Activated naive CD4-positive, alpha-beta T cell treated with anti-CD3 and anti-CD28 coated beads, Interleukin-2, amount 10 ng/mL, durations not matched to agents 7 days and 5 days (primary cell): ENCODE measurements at regions of chr11 and their contacts with region 1.

Region 1: DNA sequence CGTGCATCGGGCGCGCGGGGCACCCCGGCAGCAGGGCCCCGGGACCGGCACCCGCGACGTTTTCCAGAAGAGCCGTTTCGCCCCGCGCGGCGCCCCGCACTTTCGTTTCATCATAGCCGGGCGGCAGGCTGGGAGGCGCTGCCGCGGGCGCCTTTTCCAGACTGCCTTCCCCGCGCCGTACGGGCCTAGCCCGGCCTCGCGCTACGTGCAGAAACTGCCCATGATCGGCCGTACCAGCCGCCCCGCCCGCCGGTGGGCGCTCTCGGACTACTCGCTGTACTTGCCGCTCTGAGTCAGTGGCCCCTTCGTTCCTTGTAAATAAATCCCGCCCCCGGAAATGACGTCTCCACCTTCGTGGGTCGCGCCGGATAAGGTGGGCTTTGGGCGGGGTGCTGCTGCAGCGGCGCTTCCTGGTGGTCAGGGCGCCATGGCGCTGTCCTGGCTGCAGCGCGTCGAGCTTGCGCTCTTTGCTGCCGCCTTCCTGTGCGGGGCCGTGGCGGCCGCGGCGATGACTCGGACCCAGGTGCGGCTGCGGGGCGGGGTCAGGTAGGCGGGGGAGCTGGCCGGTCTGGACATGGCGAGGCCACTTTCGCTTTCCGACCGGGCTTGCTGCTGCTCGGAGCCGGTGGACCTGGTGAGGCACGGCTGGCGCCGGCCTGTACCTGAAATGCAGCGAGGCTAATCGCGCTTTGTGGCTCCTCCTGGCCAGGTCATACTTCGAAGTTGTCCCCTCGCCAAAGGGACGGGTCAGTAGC is at the start of gene TMEM179B:
- DNase-seq: peak; percentile 99
- H3K4me3 Mint-ChIP-seq: peak within 1 kb of the TSS; percentile 96
- H3K27ac Mint-ChIP-seq: peak within 1 kb of the TSS; percentile 98
- H3K4me1 Mint-ChIP-seq: peaks cover 50% of the 10 kb centered on the region
- H3K27me3 Mint-ChIP-seq: no peaks in the 10 kb centered on the region

Region 2: DNA sequence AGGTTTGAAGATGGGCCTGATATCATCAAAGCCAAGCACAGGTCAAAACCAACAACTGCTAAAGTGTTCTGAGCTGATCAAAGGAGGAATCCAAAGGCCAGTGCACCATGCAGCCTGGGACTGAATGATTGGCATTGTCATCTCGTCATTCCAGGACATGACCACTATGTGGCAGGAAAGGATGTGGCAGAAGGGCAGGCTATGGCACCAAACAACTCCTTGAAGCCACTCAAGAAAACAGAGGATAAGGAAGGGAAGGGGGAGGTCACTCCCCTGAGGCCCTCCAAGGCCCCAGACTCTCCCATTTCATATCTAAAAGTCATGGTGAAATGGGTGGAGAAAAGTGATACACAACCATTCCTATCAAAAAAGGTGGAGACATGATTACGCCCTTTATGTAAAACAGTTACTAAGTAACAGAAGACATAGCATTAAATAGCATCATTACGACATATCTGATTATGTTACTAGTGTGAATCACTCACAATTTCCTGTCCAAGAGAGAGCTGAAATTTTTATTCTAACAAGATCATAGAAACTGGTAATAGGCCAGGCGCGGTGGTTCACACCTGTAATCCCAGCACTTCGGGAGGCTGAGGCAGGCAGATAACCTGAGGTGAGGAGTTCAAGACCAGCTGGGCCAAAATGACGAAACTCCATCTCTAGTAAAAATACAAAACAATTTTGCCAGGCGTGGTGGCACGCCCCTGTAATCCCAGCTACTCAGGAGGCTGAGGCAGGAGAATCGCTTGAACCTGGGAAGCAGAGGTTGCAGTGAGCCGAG is 289.9 kb before region 1 on chr11:
- CTCF ChIA-PET with region 1: no interaction called
- DNase-seq: peak; percentile 36
- H3K4me3 Mint-ChIP-seq: no peak overlapping the region
- H3K27ac Mint-ChIP-seq: no peak overlapping the region
- H3K4me1 Mint-ChIP-seq: peaks cover 5% of the 10 kb centered on the region
- H3K27me3 Mint-ChIP-seq: peaks cover 51% of the 10 kb centered on the region

Region 3: GRCh38 chr11:62728171-62728988 is 58.8 kb before region 1 on chr11 and contains the start of gene TTC9C:
- CTCF ChIA-PET with region 1: interaction called, 10 read pairs
- DNase-seq: peak; percentile 90
- H3K4me3 Mint-ChIP-seq: peak within 1 kb of the TSS; percentile 94
- H3K27ac Mint-ChIP-seq: peak within 1 kb of the TSS; percentile 99
- H3K4me1 Mint-ChIP-seq: peaks cover 53% of the 10 kb centered on the region
- H3K27me3 Mint-ChIP-seq: peaks cover 3% of the 10 kb centered on the region

Region 4: DNA sequence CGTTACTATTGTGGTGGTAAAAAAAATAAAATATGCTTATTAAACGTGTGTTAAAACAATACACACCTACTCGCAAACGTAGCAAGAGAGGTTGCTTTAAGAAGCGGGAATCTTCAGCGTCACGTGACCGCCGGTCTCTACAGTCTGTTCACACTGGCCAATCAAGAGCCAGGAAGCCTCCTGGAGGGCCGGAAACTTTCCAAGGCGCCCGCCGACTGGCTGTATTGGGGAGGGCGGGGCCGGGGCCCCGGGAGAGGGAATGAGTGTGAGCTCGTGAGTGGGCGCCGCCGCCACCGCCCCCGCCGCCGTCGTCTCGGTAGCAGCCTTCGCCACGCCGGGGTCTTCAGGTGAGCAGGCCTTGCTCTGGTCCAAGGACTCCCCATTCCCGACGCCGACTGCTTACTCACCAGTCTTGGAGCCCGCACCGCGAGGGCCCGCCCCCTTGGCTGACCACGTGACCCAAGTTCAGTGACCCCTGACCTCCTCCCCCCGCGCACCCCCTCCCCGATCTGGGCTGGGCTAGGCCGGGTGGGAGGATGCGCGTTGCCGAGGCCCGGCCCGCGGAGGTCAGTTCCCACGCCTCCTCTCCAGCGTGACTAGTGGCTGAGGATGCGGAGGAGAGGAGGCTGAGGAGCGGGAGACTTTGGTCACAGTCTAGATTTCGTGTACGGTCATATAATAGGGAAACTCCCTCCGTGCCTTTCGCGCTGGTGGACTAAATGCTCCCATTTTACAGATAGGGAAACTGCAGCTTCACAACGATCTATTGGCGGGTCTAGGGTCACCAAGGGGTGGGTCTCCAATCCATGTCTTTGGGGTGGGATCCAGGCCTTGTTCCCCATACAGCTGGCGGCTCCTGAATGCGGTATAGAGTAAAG is 15.8 kb before region 1 on chr11 and contains the start of gene TAF6L:
- CTCF ChIA-PET with region 1: interaction called, 65 read pairs
- DNase-seq: peak; percentile 97
- H3K4me3 Mint-ChIP-seq: peak within 1 kb of the TSS; percentile 90
- H3K27ac Mint-ChIP-seq: peak within 1 kb of the TSS; percentile 94
- H3K4me1 Mint-ChIP-seq: peaks cover 36% of the 10 kb centered on the region
- H3K27me3 Mint-ChIP-seq: no peaks in the 10 kb centered on the region

Region 5: GRCh38 chr11:62805076-62805892 is 18.1 kb after region 1 on chr11 and contains the start of gene NXF1:
- CTCF ChIA-PET with region 1: interaction called, 15 read pairs
- DNase-seq: peak; percentile 94
- H3K4me3 Mint-ChIP-seq: peak within 1 kb of the TSS; percentile 97
- H3K27ac Mint-ChIP-seq: peak within 1 kb of the TSS; percentile 97
- H3K4me1 Mint-ChIP-seq: peaks cover 34% of the 10 kb centered on the region
- H3K27me3 Mint-ChIP-seq: peaks cover 4% of the 10 kb centered on the region

Region 6: DNA sequence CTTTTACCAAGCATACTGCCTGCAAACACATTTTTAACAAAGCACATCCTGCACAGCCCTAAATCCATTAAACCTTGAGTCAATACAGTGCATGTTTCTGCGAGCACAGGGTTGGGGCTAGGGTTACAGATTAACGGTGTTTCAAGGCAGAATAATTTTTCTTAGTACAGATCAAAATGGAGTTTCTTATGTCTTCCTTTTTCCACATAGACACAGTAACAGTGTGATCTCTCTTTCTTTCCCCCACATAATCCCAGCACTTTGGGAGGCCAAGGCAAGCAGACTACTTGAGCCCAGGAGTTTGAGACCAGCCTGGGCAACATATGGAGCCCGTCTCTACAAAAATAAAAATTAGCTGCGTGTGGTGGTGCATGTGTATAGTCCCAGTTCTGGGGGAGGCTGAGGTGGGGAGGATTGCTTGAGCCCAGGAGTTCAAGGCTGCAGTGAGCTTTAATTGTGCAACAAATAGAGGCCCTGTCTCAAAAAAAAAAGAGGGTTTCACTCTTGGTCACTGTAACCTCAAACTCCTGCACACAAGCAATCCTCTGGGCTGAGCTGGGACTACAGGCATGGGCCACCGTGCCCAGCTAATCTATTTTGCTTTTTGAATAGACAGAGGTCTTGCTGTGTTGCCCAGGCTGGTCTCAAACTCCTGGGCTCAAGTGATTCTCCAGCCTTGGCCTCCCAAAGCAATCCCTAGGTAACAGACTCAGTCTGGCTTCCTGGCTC is 73.8 kb after region 1 on chr11:
- CTCF ChIA-PET with region 1: interaction called, 46 read pairs
- DNase-seq: no peak
- H3K4me3 Mint-ChIP-seq: no peak overlapping the region
- H3K27ac Mint-ChIP-seq: peak overlapping the region; percentile 81
- H3K4me1 Mint-ChIP-seq: peaks cover 65% of the 10 kb centered on the region
- H3K27me3 Mint-ChIP-seq: peaks cover 1% of the 10 kb centered on the region

Region 7: DNA sequence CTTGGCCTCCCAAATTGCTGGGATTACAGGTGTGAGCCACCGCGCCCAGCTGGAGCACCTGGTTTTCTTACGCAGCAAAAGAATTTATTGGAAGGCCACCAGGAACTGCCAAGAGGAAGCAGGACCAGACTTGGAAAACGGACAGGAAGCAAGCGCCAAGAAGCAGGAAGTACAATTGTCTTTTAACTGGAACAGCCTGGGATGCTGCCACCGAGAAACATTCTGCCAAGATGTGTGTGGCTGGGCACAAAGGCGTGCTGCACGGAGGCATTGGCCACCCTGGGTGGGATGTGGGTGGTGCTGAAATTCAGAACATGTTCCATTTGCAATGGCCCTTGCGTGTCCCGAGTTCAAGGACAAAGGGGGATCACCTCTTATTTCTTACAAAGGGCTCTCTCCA is 108.9 kb after region 1 on chr11:
- CTCF ChIA-PET with region 1: no interaction called
- DNase-seq: no peak
- H3K4me3 Mint-ChIP-seq: no peak overlapping the region
- H3K27ac Mint-ChIP-seq: no peak overlapping the region
- H3K4me1 Mint-ChIP-seq: no peaks in the 10 kb centered on the region
- H3K27me3 Mint-ChIP-seq: peaks cover 47% of the 10 kb centered on the region